PC-9 (cell line): ENCODE measurements at regions of chr11 and their contacts with region 1.

Region 1: GRCh38 chr11:78318321-78319114 is 99.1 kb downstream of the GAB2 start:
- DNase-seq: no peak
- H3K4me3 ChIP-seq: no peak overlapping the region
- H3K27ac ChIP-seq: no peak overlapping the region
- H3K4me1 ChIP-seq: peaks cover 3% of the 10 kb centered on the region
- H3K27me3 ChIP-seq: no peaks in the 10 kb centered on the region
- CTCF ChIP-seq: no peak

Region 2: DNA sequence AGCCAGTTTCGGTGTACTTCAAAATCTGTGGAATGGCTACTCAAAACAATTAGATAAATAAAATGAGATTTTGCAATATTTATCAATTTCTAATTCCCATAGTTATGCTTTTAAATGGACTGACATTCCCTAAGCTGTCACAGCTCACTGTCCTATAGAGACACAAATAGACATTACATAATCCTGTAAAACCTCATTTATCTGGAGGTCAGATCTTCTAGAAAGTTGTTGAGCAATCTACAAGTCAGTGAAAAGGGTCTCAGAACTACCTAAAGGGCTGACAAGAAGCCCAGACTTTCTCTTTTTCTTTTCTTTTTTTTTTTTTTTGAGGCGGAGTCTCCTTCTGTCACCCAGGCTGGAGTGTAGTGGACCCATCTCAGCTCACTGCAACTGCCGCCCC is 191.1 kb before region 1 on chr11:
- CTCF ChIA-PET with region 1: no interaction called
- POLR2A ChIA-PET with region 1: no interaction called
- intact Hi-C with region 1: no loop called
- DNase-seq: no peak
- H3K4me3 ChIP-seq: no peak overlapping the region
- H3K27ac ChIP-seq: no peak overlapping the region
- H3K4me1 ChIP-seq: no peaks in the 10 kb centered on the region
- H3K27me3 ChIP-seq: no peaks in the 10 kb centered on the region
- CTCF ChIP-seq: no peak

Region 3: GRCh38 chr11:78338138-78338537 is 19.6 kb after region 1 on chr11:
- CTCF ChIA-PET with region 1: no interaction called
- POLR2A ChIA-PET with region 1: interaction called, 23 read pairs
- intact Hi-C with region 1: no loop called
- DNase-seq: no peak
- H3K4me3 ChIP-seq: no peak overlapping the region
- H3K27ac ChIP-seq: no peak overlapping the region
- H3K4me1 ChIP-seq: no peaks in the 10 kb centered on the region
- H3K27me3 ChIP-seq: no peaks in the 10 kb centered on the region
- CTCF ChIP-seq: no peak

Region 4: DNA sequence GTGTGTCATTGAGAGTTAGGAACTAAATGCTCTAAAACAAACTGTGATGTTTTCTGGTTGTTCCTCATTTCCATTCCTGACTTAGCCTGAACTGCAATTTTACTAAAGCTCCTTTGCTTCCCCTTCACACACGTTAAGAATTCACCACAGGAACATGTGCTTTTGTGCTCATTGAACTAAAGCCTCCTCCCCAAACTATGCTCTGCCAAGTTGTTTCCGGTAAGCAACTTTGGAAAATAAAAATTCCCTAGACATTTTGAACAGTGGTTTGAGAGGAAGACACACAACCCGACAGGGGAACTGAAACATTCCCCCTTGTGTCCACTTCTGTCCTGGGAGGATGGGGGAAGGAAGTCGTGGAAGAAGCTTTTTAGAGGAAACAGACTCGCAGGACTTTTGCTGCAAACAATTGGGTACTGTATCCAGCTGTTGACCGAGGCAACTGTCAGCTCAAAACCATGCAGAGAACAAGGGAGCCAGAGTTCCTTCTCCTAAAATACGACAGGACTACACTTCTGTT is 32.2 kb after region 1 on chr11:
- CTCF ChIA-PET with region 1: no interaction called
- POLR2A ChIA-PET with region 1: no interaction called
- intact Hi-C with region 1: no loop called
- DNase-seq: no peak
- H3K4me3 ChIP-seq: no peak overlapping the region
- H3K27ac ChIP-seq: no peak overlapping the region
- H3K4me1 ChIP-seq: peaks cover 23% of the 10 kb centered on the region
- H3K27me3 ChIP-seq: no peaks in the 10 kb centered on the region
- CTCF ChIP-seq: no peak

Region 5: GRCh38 chr11:78406538-78407196 is 88.1 kb after region 1 on chr11:
- CTCF ChIA-PET with region 1: interaction called, 12 read pairs
- POLR2A ChIA-PET with region 1: no interaction called
- intact Hi-C with region 1: no loop called
- DNase-seq: peak; percentile 39 to 81
- H3K4me3 ChIP-seq: no peak overlapping the region
- H3K27ac ChIP-seq: peak overlapping the region; percentile 8
- H3K4me1 ChIP-seq: peaks cover 16% of the 10 kb centered on the region
- H3K27me3 ChIP-seq: no peaks in the 10 kb centered on the region
- CTCF ChIP-seq: no peak